ENCODE measurements at regions of chr7 and their contacts with region 1.

Region 1: DNA sequence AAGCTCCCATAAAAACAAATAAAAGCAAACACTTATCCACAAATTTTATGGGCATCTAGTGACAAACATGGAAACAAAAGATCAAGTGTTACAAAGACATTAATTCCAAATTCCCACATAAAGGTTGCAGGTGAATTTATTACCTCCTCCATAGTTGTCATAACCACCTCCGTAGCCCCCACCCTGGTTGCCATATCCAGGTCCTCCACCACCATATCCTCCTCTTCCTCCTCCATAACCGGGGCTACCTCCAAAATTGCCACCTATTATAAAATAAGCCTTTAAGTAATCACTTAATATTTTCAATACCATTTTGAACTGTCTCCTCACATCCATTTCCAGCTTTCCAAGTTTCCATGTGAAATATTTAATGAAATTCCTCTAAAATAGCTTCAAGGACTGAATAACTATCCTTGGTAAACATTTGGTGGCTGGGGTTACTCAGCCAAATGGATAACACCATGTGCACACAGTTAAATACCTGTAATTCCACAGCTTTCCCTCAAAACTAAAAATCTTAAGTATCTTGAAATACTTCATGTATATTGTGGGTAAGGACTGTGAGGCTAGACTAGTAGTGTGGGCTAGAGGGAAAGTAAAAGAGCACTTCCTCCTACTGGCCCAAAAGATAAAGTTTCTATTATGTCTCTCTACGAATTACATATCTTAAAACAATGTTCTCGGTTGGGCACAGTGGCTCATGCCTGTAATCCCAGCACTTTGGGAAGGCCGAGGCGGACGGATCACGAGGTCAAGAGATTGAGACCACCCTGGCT is 6.9 kb downstream of the HNRNPA2B1 start:
- DNase-seq: no peak
- ATAC-seq: peak; percentile 35
- H3K4me3 Mint-ChIP-seq: peak overlapping the region; percentile 85
- H3K27ac Mint-ChIP-seq: peak overlapping the region; percentile 82
- H3K4me1 Mint-ChIP-seq: peaks cover 79% of the 10 kb centered on the region
- H3K27me3 Mint-ChIP-seq: no peaks in the 10 kb centered on the region

Region 2: GRCh38 chr7:26090927-26091519 is 102.6 kb before region 1 on chr7:
- POLR2A ChIA-PET with region 1: interaction called, 15 read pairs
- DNase-seq: no peak
- ATAC-seq: peak; percentile 46
- H3K4me3 Mint-ChIP-seq: peak overlapping the region; percentile 20
- H3K27ac Mint-ChIP-seq: peak overlapping the region; percentile 17
- H3K4me1 Mint-ChIP-seq: peaks cover 16% of the 10 kb centered on the region
- H3K27me3 Mint-ChIP-seq: peaks cover 2% of the 10 kb centered on the region